ENCODE measurements at regions of chr2 and their contacts with region 1.

Region 1: DNA sequence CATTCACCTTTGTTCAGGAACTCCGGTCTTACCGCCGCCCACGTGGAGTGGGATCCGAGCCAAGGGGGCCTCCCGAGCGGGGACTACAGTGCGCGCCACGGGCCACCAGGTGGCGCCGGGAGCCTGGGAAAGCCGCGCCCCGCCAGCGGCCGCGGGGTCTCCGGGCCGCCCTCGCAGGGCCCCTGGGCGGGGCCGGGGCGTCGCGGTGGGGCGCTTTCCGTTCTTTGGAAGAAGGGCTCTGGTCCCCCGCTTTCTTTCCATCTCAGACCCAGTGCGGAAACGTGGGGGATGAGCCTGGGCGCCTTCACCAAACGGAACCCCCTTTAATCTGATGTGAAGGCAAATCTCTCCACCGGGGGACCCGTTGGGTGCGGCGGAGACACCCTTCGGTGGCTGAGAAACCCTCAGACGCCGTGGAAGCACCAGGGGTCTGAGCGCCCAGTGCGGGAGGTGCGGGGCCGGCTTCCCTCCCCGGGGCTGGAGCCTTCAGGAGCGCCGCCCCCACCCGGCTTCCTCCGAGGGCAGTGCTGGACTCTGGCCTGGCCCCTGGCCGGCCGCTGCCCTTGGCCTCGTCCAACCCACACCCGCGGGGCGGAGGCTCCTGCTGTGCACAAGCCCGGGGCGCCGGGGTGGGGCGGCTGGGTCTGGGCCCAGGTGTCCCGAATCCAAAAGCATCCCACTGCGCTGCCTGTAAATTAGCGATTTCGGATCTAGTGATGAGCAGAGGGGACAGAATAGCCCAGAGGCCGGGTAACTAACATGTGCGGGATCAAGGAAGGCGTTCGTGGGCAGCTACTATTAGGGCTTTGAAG is 44.6 kb downstream of the GORASP2 start:
- DNase-seq: peak; percentile 96 to 99 (median 98)
- ATAC-seq: peak; percentile 92
- H3K4me3 ChIP-seq: peak overlapping the region; percentile 56
- H3K27ac ChIP-seq: peak overlapping the region; percentile 73
- H3K4me1 ChIP-seq: peaks cover 12 to 20% of the 10 kb centered on the region in 2 experiments; a peak in 4 of 5 replicates
- H3K27me3 ChIP-seq: no peaks in the 10 kb centered on the region
- CTCF ChIP-seq: peak; percentile 91 to 96 (median 93)
- EP300 ChIP-seq: peak; percentile 56
- POLR2A ChIP-seq: peak; percentile 77
- RAD21 ChIP-seq: peak; percentile 99 to 100

Region 2: DNA sequence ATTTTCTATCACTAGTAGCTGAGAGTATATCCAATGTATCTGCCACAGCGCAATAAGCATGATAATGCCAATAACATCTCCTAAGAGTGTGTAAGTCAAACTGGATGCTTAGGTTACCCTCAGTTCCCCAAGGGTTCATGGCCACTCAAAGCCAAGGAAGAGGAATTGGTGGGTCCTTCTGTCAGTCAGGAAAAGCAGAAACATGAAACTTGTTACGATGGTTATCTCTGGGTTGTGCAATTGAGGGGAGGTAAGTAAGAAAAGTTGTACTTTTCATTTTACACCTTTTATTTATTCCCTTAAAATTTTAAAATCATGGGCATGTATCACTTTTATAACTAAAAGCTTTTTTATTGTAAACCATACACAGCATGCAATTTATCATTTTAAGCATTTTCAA is 167.2 kb before region 1 on chr2:
- CTCF ChIA-PET with region 1: no interaction called
- POLR2A ChIA-PET with region 1: no interaction called
- in situ Hi-C with region 1: no loop called
- intact Hi-C with region 1: no loop called
- DNase-seq: no peak
- ATAC-seq: no peak
- H3K4me3 ChIP-seq: no peak overlapping the region
- H3K27ac ChIP-seq: no peak overlapping the region
- H3K4me1 ChIP-seq: no peaks in the 10 kb centered on the region
- H3K27me3 ChIP-seq: peaks cover 0 to 2% of the 10 kb centered on the region in 2 experiments; a peak in 1 of 5 replicates
- CTCF ChIP-seq: no peak
- EP300 ChIP-seq: no peak
- POLR2A ChIP-seq: no peak
- RAD21 ChIP-seq: no peak

Region 3: DNA sequence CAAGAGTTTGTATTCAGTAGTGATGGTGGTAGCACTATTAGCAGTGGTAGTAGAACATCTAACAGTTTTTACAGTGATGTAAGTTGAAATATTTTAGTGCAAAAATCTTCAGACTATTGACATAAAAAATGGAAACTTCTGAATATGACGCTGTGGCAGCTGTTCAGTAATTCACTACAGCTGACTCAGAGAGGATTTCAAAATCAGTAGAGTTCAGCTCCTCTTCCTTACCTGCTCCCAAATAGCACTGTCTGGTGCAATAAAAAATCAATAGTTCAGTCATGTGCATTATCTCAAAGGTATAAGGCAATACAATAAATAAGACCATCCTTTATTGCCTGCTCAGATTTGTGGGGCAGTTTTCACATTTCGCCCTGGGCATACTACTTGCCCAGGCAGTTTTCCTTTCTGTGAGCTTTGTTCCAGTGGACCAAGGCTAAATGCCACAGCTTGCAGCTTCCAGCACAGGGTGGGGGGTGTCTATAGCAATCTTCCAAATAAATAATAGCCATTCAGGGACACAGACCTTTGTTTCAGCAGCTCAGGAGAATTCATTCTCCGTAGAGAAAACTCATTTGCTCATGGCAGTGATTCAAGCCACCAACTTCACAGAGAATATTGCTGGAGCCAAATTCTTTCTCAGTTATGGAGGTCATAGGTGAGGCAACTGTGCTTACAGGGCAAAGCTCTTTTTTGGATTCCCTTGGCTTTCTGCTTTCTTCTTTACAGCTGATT is 78.5 kb before region 1 on chr2:
- CTCF ChIA-PET with region 1: no interaction called
- POLR2A ChIA-PET with region 1: no interaction called
- in situ Hi-C with region 1: no loop called
- intact Hi-C with region 1: no loop called
- DNase-seq: no peak
- ATAC-seq: no peak
- H3K4me3 ChIP-seq: no peak overlapping the region
- H3K27ac ChIP-seq: no peak overlapping the region
- H3K4me1 ChIP-seq: no peaks in the 10 kb centered on the region
- H3K27me3 ChIP-seq: peaks cover 15 to 23% of the 10 kb centered on the region in 2 experiments; a peak in 4 of 5 replicates
- CTCF ChIP-seq: no peak
- EP300 ChIP-seq: no peak
- POLR2A ChIP-seq: no peak
- RAD21 ChIP-seq: no peak

Region 4: GRCh38 chr2:170928824-170929685 is 44.6 kb before region 1 on chr2 and contains the start of gene GORASP2:
- CTCF ChIA-PET with region 1: no interaction called
- POLR2A ChIA-PET with region 1: interaction called, 10 read pairs
- in situ Hi-C with region 1: no loop called
- intact Hi-C with region 1: loop called (anchors 1 kb)
- DNase-seq: peak; percentile 98 to 100 (median 98)
- ATAC-seq: peak; percentile 94
- H3K4me3 ChIP-seq: peak within 1 kb of the TSS; percentile 81
- H3K27ac ChIP-seq: peak within 1 kb of the TSS; percentile 95
- H3K4me1 ChIP-seq: peaks cover 13 to 26% of the 10 kb centered on the region in 2 experiments; a peak in 4 of 5 replicates
- H3K27me3 ChIP-seq: no peaks in the 10 kb centered on the region
- CTCF ChIP-seq: peak in 2 of 3 experiments; percentile 93 to 99; a peak in 5 of 6 replicates
- EP300 ChIP-seq: peak; percentile 38
- POLR2A ChIP-seq: peak; percentile 96
- RAD21 ChIP-seq: peak; percentile 69 to 72
- polyA plus RNA-seq, gene GORASP2: 27.4 to 29.9 TPM

Region 5: DNA sequence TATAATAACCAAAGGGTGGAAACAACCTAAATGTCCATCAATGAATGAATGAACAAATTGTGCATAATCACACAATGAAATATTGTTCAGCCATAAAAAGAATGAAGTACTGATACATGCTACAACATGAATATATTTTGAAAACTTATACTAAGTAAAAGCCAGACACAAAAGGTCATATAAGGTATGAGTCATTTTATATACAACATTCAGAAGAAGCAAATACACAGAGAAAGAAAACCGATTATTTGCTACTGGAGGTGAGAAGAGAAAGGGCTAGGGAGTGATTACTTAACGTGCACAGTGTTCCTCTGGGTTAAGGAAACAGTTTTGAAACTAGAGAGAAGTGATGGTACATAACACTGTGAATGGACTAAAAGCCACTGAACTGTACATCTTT is 60.6 kb after region 1 on chr2:
- CTCF ChIA-PET with region 1: no interaction called
- POLR2A ChIA-PET with region 1: no interaction called
- in situ Hi-C with region 1: no loop called
- intact Hi-C with region 1: no loop called
- DNase-seq: no peak
- ATAC-seq: no peak
- H3K4me3 ChIP-seq: no peak overlapping the region
- H3K27ac ChIP-seq: no peak overlapping the region
- H3K4me1 ChIP-seq: no peaks in the 10 kb centered on the region
- H3K27me3 ChIP-seq: no peaks in the 10 kb centered on the region
- CTCF ChIP-seq: no peak
- EP300 ChIP-seq: no peak
- POLR2A ChIP-seq: no peak
- RAD21 ChIP-seq: no peak

Region 6: GRCh38 chr2:171244970-171245782 is 271.5 kb after region 1 on chr2:
- CTCF ChIA-PET with region 1: interaction called, 9 read pairs
- POLR2A ChIA-PET with region 1: no interaction called
- in situ Hi-C with region 1: no loop called
- intact Hi-C with region 1: loop called (anchors 1 kb)
- DNase-seq: peak in 1 of 4 experiments; percentile 66
- ATAC-seq: peak; percentile 72
- H3K4me3 ChIP-seq: no peak overlapping the region
- H3K27ac ChIP-seq: peak overlapping the region; percentile 65; the same call in 2 of the 3 replicates
- H3K4me1 ChIP-seq: peaks cover 0 to 21% of the 10 kb centered on the region in 2 experiments; a peak in 4 of 5 replicates
- H3K27me3 ChIP-seq: no peaks in the 10 kb centered on the region
- CTCF ChIP-seq: peak; percentile 41 to 62 (median 46); a peak in 5 of 6 replicates
- EP300 ChIP-seq: peak; percentile 72
- POLR2A ChIP-seq: no peak
- RAD21 ChIP-seq: peak; percentile 60 to 79

Region 7: DNA sequence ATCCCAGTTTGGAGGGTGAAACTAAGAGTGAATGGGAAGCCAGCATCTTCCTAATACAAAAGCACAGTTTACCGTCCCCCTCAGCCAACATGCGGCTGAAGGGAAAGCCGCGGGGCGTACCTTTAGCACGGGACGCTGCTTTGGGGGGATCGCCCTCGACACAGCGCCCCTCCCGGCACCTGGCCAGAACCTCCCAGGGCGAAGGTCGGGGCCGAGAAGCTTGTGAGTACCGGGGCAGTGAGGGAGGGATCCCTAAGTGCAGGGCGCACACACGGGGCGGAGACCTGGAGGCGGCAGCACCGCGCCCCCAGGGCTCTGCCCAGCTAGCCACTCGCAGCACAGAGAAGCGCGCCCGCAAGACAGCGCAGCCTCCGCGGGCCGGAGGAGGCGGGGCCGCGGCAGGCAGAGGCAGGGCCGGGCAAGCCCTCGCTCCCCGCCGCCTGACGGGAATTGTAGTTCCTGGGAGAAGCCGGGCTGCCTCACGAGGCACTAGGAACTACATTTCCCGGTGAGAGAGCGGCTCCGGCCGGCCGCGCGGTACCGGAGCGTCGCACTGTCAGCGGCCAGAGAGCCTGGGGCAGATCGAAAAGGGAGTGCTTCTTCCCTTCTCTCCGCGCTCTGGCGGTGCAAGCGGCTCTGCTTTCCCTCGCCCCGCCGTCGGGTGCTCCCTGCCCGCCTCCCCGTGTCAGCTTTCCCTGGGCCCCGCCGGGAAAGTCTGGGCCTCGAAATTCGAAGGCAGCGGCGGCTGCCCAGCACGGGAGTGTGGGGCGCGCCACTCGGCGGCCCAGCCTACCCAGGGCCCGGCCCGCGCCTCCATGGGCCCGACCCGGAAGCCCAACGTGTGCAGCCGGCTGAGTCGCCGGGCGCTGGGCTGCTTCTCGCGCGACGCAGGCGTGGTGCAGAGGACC is 460.3 kb after region 1 on chr2 and contains the starts of genes DCAF17 and METTL8:
- CTCF ChIA-PET with region 1: no interaction called
- POLR2A ChIA-PET with region 1: interaction called, 3 read pairs
- in situ Hi-C with region 1: no loop called
- intact Hi-C with region 1: loop called (anchors 5 kb)
- DNase-seq: peak; percentile 95 to 99 (median 96)
- ATAC-seq: peak; percentile 97
- H3K4me3 ChIP-seq: peak within 1 kb of the TSS; percentile 86
- H3K27ac ChIP-seq: peak within 1 kb of the TSS; percentile 94
- H3K4me1 ChIP-seq: peaks cover 13 to 18% of the 10 kb centered on the region in 2 experiments
- H3K27me3 ChIP-seq: no peaks in the 10 kb centered on the region
- CTCF ChIP-seq: peak; percentile 92 to 93 (median 92)
- EP300 ChIP-seq: peak; percentile 34; the same call in 1 of the 2 replicates
- POLR2A ChIP-seq: peak; percentile 96
- RAD21 ChIP-seq: peak; percentile 13 to 45; a peak in 3 of 4 replicates
- polyA plus RNA-seq, gene DCAF17: 10.0 to 12.0 TPM
- polyA plus RNA-seq, gene METTL8: 12.9 to 16.7 TPM

Region 8: GRCh38 chr2:172113617-172114016 is 1139.9 kb after region 1 on chr2:
- CTCF ChIA-PET with region 1: no interaction called
- POLR2A ChIA-PET with region 1: no interaction called
- in situ Hi-C with region 1: loop called (anchors 25 kb)
- intact Hi-C with region 1: loop called (anchors 10 kb)
- DNase-seq: peak; percentile 39 to 70 (median 48)
- ATAC-seq: peak; percentile 92
- H3K4me3 ChIP-seq: no peak overlapping the region
- H3K27ac ChIP-seq: no peak overlapping the region
- H3K4me1 ChIP-seq: peaks cover 0 to 5% of the 10 kb centered on the region in 2 experiments; a peak in 1 of 5 replicates
- H3K27me3 ChIP-seq: peaks cover 2 to 6% of the 10 kb centered on the region in 2 experiments; a peak in 3 of 5 replicates
- CTCF ChIP-seq: peak; percentile 57 to 82 (median 73); a peak in 5 of 6 replicates
- EP300 ChIP-seq: no peak
- POLR2A ChIP-seq: no peak
- RAD21 ChIP-seq: peak; percentile 85 to 97